ENCODE measurements at regions of chr18 and their contacts with region 1.

Region 1: GRCh38 chr18:42114310-42114943 is 159.4 kb downstream of the PIK3C3 start:
- DNase-seq: peak; percentile 63
- H3K4me3 Mint-ChIP-seq: no peak overlapping the region
- H3K27ac Mint-ChIP-seq: no peak overlapping the region
- H3K4me1 Mint-ChIP-seq: peaks cover 12% of the 10 kb centered on the region
- H3K27me3 Mint-ChIP-seq: no peaks in the 10 kb centered on the region

Region 2: DNA sequence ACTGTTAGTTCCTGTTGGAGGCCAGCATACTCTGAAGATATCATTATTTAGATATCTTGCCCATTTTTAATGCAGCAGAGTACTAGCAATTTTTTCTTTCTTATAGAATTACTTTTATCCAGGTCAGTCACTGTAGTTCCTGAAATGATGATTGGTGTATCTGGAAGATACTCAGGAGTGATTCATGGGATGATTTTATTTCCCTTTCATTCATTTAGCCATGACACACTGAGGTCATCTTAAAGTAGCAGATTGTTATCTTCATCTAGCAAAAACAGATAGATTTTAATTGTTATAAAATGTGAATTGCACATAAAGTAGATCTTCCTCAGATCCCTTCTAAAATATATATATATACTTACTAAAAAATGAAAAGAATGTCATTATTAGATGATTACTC is 50.3 kb before region 1 on chr18:
- CTCF ChIA-PET with region 1: interaction called, 12 read pairs
- POLR2A ChIA-PET with region 1: no interaction called
- intact Hi-C with region 1: no loop called
- DNase-seq: no peak
- H3K4me3 Mint-ChIP-seq: no peak overlapping the region
- H3K27ac Mint-ChIP-seq: no peak overlapping the region
- H3K4me1 Mint-ChIP-seq: peaks cover 4% of the 10 kb centered on the region
- H3K27me3 Mint-ChIP-seq: no peaks in the 10 kb centered on the region

Region 3: DNA sequence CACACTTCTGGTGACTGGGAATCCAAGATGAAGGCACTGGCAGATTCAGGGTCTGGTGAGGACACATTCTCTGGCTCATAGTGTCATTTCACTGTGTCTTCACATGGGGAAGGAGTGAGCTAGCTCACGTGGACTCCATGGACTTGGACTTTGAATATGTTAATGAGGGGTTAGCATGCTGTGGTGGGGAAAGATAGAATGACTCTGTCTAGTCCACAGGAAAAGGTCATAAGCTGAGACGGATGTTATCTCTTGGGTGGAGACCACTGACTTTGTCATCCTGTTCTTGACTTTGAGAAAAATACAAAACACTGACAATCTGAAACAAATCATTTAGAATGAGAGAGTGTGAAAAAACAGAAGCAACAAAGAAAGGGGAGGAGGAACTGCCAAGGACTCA is 13.5 kb before region 1 on chr18:
- CTCF ChIA-PET with region 1: interaction called, 14 read pairs
- POLR2A ChIA-PET with region 1: no interaction called
- intact Hi-C with region 1: no loop called
- DNase-seq: no peak
- H3K4me3 Mint-ChIP-seq: no peak overlapping the region
- H3K27ac Mint-ChIP-seq: no peak overlapping the region
- H3K4me1 Mint-ChIP-seq: no peaks in the 10 kb centered on the region
- H3K27me3 Mint-ChIP-seq: no peaks in the 10 kb centered on the region

Region 4: GRCh38 chr18:42274488-42275137 is 160.2 kb after region 1 on chr18:
- CTCF ChIA-PET with region 1: interaction called, 7 read pairs
- POLR2A ChIA-PET with region 1: no interaction called
- intact Hi-C with region 1: loop called (anchors 1 kb)
- DNase-seq: no peak
- H3K4me3 Mint-ChIP-seq: no peak overlapping the region
- H3K27ac Mint-ChIP-seq: no peak overlapping the region
- H3K4me1 Mint-ChIP-seq: no peaks in the 10 kb centered on the region
- H3K27me3 Mint-ChIP-seq: no peaks in the 10 kb centered on the region

Region 5: GRCh38 chr18:43271593-43272432 is 1157.4 kb after region 1 on chr18:
- CTCF ChIA-PET with region 1: interaction called, 86 read pairs
- POLR2A ChIA-PET with region 1: no interaction called
- intact Hi-C with region 1: loop called (anchors 1 kb)
- DNase-seq: no peak
- H3K4me3 Mint-ChIP-seq: no peak overlapping the region
- H3K27ac Mint-ChIP-seq: no peak overlapping the region
- H3K4me1 Mint-ChIP-seq: no peaks in the 10 kb centered on the region
- H3K27me3 Mint-ChIP-seq: no peaks in the 10 kb centered on the region

Measured in activated CD4-positive, alpha-beta memory T cell treated with anti-CD3 and anti-CD28 coated beads for 36 hours (primary cell).